ENCODE measurements at regions of chr7 and their contacts with region 1.

Region 1: GRCh38 chr7:30348083-30348560 is 63.7 kb downstream of the ZNRF2 start:
- DNase-seq: peak; percentile 64
- ATAC-seq: peak; percentile 84
- H3K4me3 ChIP-seq: no peak overlapping the region
- H3K4me3 Mint-ChIP-seq: peak overlapping the region; percentile 40
- H3K27ac ChIP-seq: peak overlapping the region in 1 of 2 donors; percentile 59
- H3K27ac Mint-ChIP-seq: peak overlapping the region; percentile 69
- H3K4me1 ChIP-seq: peaks cover 21 to 53% of the 10 kb centered on the region in 2 donors
- H3K4me1 Mint-ChIP-seq: peaks cover 61% of the 10 kb centered on the region
- H3K27me3 ChIP-seq: no peaks in the 10 kb centered on the region
- H3K27me3 Mint-ChIP-seq: no peaks in the 10 kb centered on the region
- CTCF ChIP-seq: no peak

Region 2: GRCh38 chr7:30134611-30135545 is 213.2 kb before region 1 on chr7 and contains the start of gene MTURN:
- CTCF ChIA-PET with region 1: interaction called, 3 read pairs
- POLR2A ChIA-PET with region 1: no interaction called
- intact Hi-C with region 1: loop called (anchors 10 kb)
- DNase-seq: peak; percentile 92
- ATAC-seq: peak; percentile 83
- H3K4me3 ChIP-seq: peak within 1 kb of the TSS; percentile 63 to 95 (median 83)
- H3K4me3 Mint-ChIP-seq: peak within 1 kb of the TSS; percentile 98
- H3K27ac ChIP-seq: peak within 1 kb of the TSS in 1 of 2 donors; percentile 39
- H3K27ac Mint-ChIP-seq: peak within 1 kb of the TSS; percentile 93
- H3K4me1 ChIP-seq: peaks cover 0 to 18% of the 10 kb centered on the region in 2 donors
- H3K4me1 Mint-ChIP-seq: peaks cover 18% of the 10 kb centered on the region
- H3K27me3 ChIP-seq: peaks cover 0 to 3% (median 1%) of the 10 kb centered on the region in 4 experiments
- H3K27me3 Mint-ChIP-seq: peaks cover 11% of the 10 kb centered on the region
- CTCF ChIP-seq: no peak
- total RNA-seq, gene MTURN: 13.9 and 16.5 TPM in 2 replicates

Region 3: GRCh38 chr7:30276203-30276900 is 71.8 kb before region 1 on chr7:
- CTCF ChIA-PET with region 1: interaction called, 89 read pairs
- POLR2A ChIA-PET with region 1: no interaction called
- intact Hi-C with region 1: no loop called
- DNase-seq: peak; percentile 66
- ATAC-seq: peak; percentile 72
- H3K4me3 ChIP-seq: no peak overlapping the region
- H3K4me3 Mint-ChIP-seq: no peak overlapping the region
- H3K27ac ChIP-seq: no peak overlapping the region
- H3K27ac Mint-ChIP-seq: no peak overlapping the region
- H3K4me1 ChIP-seq: peaks cover 8 to 9% of the 10 kb centered on the region in 2 donors
- H3K4me1 Mint-ChIP-seq: peaks cover 16% of the 10 kb centered on the region
- H3K27me3 ChIP-seq: no peaks in the 10 kb centered on the region
- H3K27me3 Mint-ChIP-seq: no peaks in the 10 kb centered on the region
- CTCF ChIP-seq: peak; percentile 70

Region 4: GRCh38 chr7:30308389-30308788 is 39.7 kb before region 1 on chr7:
- CTCF ChIA-PET with region 1: no interaction called
- POLR2A ChIA-PET with region 1: no interaction called
- intact Hi-C with region 1: loop called (anchors 5 kb)
- DNase-seq: no peak
- ATAC-seq: peak; percentile 49
- H3K4me3 ChIP-seq: no peak overlapping the region
- H3K4me3 Mint-ChIP-seq: no peak overlapping the region
- H3K27ac ChIP-seq: no peak overlapping the region
- H3K27ac Mint-ChIP-seq: no peak overlapping the region
- H3K4me1 ChIP-seq: peaks cover 25 to 46% of the 10 kb centered on the region in 2 donors
- H3K4me1 Mint-ChIP-seq: peaks cover 73% of the 10 kb centered on the region
- H3K27me3 ChIP-seq: no peaks in the 10 kb centered on the region
- H3K27me3 Mint-ChIP-seq: no peaks in the 10 kb centered on the region
- CTCF ChIP-seq: no peak

Region 5: DNA sequence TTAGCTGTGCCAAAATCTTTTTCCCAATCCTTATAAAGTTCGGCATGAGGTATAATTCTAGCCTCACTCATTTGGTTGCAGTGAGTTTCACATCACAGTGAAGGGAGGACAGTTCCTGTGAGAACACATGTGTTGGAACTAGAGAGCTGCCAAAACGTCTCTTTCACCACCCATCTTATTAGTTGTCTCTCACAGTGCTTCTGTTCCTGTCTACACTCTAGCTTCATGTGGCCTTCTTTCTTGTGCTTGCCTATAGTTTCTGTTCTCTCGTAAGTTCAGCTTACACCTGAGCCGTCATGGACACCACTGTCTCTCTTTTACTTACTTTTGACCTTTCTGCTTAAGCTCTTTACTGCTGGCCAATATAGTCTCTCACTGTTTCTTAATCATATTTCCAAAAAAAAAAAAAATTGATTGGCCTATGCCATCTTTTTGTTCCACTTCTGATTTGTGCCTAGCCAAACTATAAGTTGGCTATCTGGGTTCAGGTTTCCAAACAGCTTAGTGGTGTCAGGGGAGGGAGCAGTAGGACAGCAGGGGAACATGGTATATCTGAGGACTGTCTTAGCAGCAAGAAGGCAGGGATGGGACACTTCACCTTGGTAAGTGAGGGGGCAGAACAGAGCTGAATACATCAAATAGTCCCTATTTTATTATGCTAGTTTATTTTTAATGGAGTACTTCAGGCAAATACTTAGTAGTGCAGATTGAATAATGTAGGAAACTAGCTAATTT is 25.7 kb before region 1 on chr7:
- CTCF ChIA-PET with region 1: interaction called, 27 read pairs
- POLR2A ChIA-PET with region 1: interaction called, 18 read pairs
- intact Hi-C with region 1: loop called (anchors 1 kb)
- DNase-seq: peak; percentile 63
- ATAC-seq: peak; percentile 74
- H3K4me3 ChIP-seq: peak overlapping the region; percentile 11 to 51 (median 47)
- H3K4me3 Mint-ChIP-seq: peak overlapping the region; percentile 87
- H3K27ac ChIP-seq: peak overlapping the region; percentile 87 to 94
- H3K27ac Mint-ChIP-seq: peak overlapping the region; percentile 97
- H3K4me1 ChIP-seq: peaks cover 29 to 46% of the 10 kb centered on the region in 2 donors
- H3K4me1 Mint-ChIP-seq: peaks cover 79% of the 10 kb centered on the region
- H3K27me3 ChIP-seq: no peaks in the 10 kb centered on the region
- H3K27me3 Mint-ChIP-seq: no peaks in the 10 kb centered on the region
- CTCF ChIP-seq: no peak

Region 6: GRCh38 chr7:30406664-30407425 is 58.7 kb after region 1 on chr7:
- CTCF ChIA-PET with region 1: interaction called, 3 read pairs
- POLR2A ChIA-PET with region 1: no interaction called
- intact Hi-C with region 1: loop called (anchors 10 kb)
- DNase-seq: no peak
- ATAC-seq: no peak
- H3K4me3 ChIP-seq: no peak overlapping the region
- H3K4me3 Mint-ChIP-seq: no peak overlapping the region
- H3K27ac ChIP-seq: no peak overlapping the region
- H3K27ac Mint-ChIP-seq: no peak overlapping the region
- H3K4me1 ChIP-seq: peaks cover 13 to 17% of the 10 kb centered on the region in 2 donors
- H3K4me1 Mint-ChIP-seq: peaks cover 24% of the 10 kb centered on the region
- H3K27me3 ChIP-seq: no peaks in the 10 kb centered on the region
- H3K27me3 Mint-ChIP-seq: no peaks in the 10 kb centered on the region
- CTCF ChIP-seq: no peak

Region 7: GRCh38 chr7:30445770-30446169 is 97.6 kb after region 1 on chr7:
- CTCF ChIA-PET with region 1: interaction called, 6 read pairs
- POLR2A ChIA-PET with region 1: interaction called, 14 read pairs
- intact Hi-C with region 1: no loop called
- DNase-seq: peak; percentile 91
- ATAC-seq: peak; percentile 100
- H3K4me3 ChIP-seq: no peak overlapping the region
- H3K4me3 Mint-ChIP-seq: no peak overlapping the region
- H3K27ac ChIP-seq: peak overlapping the region in 1 of 2 donors; percentile 64
- H3K27ac Mint-ChIP-seq: peak overlapping the region; percentile 75
- H3K4me1 ChIP-seq: peaks cover 12% of the 10 kb centered on the region in 2 donors
- H3K4me1 Mint-ChIP-seq: peaks cover 8% of the 10 kb centered on the region
- H3K27me3 ChIP-seq: no peaks in the 10 kb centered on the region
- H3K27me3 Mint-ChIP-seq: no peaks in the 10 kb centered on the region
- CTCF ChIP-seq: peak; percentile 71